Right cardiac atrium (tissue), 5 donors: ENCODE measurements at regions of chr6 and their contacts with region 1.

Region 1: DNA sequence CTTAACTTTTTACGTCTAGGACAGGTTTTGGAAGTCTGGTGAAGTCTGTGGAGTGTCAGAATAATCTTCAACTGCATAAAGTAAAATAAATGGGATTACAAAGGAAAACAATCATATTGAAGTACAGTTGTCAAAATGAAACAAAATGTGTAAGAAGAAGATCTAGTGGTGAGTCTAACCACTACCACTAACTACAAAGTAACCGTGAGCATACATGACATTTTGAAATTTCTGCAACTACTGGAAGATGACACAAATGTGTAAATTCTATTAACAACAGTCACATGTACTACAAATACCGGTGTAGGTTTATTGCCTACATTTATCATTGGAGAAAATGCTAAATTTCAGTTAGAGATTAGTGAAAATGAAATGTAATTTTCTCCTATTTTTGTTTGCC is 29.7 kb downstream of the VPS52 start:
- DNase-seq: no peak
- ATAC-seq: no peak
- H3K4me3 ChIP-seq: no peak overlapping the region
- H3K27ac ChIP-seq: no peak overlapping the region
- H3K4me1 ChIP-seq: no peaks in the 10 kb centered on the region
- H3K27me3 ChIP-seq: no peaks in the 10 kb centered on the region

Region 2: GRCh38 chr6:33172688-33173534 is 69.1 kb before region 1 on chr6:
- intact Hi-C with region 1: loop called in 2 of 4 experiments (anchors 5 to 10 kb)
- DNase-seq: peak; percentile 8 to 30 (median 14)
- ATAC-seq: no peak
- H3K4me3 ChIP-seq: no peak overlapping the region
- H3K27ac ChIP-seq: no peak overlapping the region
- H3K4me1 ChIP-seq: no peaks in the 10 kb centered on the region
- H3K27me3 ChIP-seq: no peaks in the 10 kb centered on the region